Aorta (tissue), 5 donors: ENCODE measurements at regions of chr18 and their contacts with region 1.

Region 1: DNA sequence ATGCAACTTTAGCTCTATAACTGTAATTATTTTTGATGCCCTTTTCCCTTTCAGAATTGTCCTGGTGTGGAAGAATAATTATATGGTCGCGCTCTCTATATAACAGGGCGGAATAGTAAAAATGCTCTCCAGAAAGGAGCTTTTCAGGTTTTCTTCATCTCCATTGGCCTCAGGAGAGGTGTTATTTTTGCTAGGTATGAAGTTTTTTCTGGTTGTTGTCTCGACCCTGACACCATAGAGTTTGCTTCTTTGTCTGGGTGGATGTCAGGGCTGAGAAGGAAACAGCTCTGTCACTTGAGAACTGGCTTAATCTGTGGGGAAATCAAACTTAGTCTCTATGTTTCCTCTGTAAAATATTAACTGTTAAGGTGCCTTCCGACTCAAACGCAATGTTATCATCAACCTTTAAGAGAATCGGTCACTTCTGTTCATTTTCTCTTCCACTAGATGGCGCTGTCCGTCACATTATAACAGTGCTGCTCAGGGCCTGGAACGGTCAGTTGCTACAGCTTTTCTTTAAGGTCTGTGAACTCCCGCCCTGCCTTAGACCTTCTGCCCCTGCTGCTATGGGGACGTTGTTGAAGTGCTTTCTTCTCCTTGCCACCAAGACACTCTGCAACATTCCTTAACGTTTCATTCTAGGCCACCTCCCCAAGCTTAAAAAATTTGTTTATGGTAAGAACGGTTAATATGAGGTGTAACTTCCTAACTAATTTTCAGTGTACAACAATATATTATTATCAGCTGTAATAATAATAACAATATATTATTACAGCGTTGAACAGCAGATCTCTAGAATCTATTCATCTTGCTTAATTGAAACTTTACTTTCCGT is 23.8 kb upstream of the SERPINB12 start:
- DNase-seq: peak in 1 of 2 donors; percentile 44
- ATAC-seq: peak; percentile 77
- H3K4me3 ChIP-seq: no peak overlapping the region
- H3K27ac ChIP-seq: no peak overlapping the region
- H3K4me1 ChIP-seq: no peaks in the 10 kb centered on the region
- H3K27me3 ChIP-seq: no peaks in the 10 kb centered on the region

Region 2: GRCh38 chr18:63578357-63578958 is 60.1 kb after region 1 on chr18:
- intact Hi-C with region 1: loop called (anchors 1 to 2 kb)
- DNase-seq: no peak
- ATAC-seq: no peak
- H3K4me3 ChIP-seq: no peak overlapping the region
- H3K27ac ChIP-seq: no peak overlapping the region
- H3K4me1 ChIP-seq: no peaks in the 10 kb centered on the region
- H3K27me3 ChIP-seq: no peaks in the 10 kb centered on the region

Region 3: GRCh38 chr18:63586431-63586830 is 68.0 kb after region 1 on chr18:
- intact Hi-C with region 1: loop called in 1 of 2 experiments (anchors 2 kb)
- DNase-seq: no peak
- ATAC-seq: no peak
- H3K4me3 ChIP-seq: no peak overlapping the region
- H3K27ac ChIP-seq: no peak overlapping the region
- H3K4me1 ChIP-seq: no peaks in the 10 kb centered on the region
- H3K27me3 ChIP-seq: no peaks in the 10 kb centered on the region

Region 4: DNA sequence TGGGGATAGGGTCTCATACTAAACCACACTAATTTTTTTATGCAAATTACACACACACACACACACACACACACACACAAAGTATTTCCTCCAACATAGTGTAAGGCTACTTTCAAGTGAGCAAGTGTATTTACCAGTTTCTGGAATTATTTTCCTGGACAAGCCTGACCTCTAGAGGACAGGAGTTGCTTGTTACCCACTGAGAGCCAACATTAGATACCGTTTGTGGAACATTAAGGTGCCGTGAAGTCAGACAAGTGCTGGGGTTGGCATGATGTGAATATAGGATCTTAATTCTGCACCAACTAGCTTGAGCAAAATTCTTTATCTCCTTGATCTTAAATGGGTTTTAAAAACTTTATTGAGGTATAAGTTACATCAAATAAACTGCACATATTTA is 329.8 kb after region 1 on chr18:
- intact Hi-C with region 1: loop called (anchors 2 to 5 kb)
- DNase-seq: no peak
- ATAC-seq: peak; percentile 52
- H3K4me3 ChIP-seq: no peak overlapping the region
- H3K27ac ChIP-seq: no peak overlapping the region
- H3K4me1 ChIP-seq: no peaks in the 10 kb centered on the region
- H3K27me3 ChIP-seq: no peaks in the 10 kb centered on the region

Region 5: GRCh38 chr18:63936156-63936931 is 417.9 kb after region 1 on chr18:
- intact Hi-C with region 1: loop called (anchors 2 to 5 kb)
- DNase-seq: peak; percentile 89 to 93
- ATAC-seq: peak; percentile 95
- H3K4me3 ChIP-seq: peak overlapping the region; percentile 23 to 33
- H3K27ac ChIP-seq: no peak overlapping the region
- H3K4me1 ChIP-seq: no peaks in the 10 kb centered on the region
- H3K27me3 ChIP-seq: no peaks in the 10 kb centered on the region

Region 6: DNA sequence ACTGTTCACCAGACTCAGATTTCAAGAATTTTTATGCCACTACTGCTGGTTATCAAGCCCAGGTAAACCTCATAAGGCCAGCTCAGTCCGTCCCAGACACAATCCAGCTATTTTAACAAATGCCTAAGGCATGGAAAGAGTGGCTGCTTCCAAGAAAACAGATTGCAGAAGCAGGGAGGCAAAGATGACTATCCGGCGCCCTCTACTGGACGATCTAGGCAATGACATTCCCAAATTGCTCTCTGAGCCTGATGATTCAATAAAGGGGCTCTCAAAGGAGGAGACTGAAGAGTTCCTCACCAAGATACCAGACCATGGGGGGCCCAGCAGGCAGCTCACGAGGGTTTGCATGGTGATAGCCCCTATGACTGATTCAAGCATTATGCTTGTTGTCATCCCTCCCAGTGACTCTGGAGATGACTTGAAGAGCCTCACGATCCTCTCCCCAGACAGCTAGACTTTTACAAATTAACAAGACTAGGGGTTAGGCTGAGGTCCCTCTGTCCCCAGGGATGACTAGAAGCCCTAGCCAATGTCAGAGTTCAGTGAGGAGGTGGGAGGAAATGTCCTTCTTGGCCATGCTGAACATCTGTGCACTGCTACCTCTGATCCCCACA is 476.5 kb after region 1 on chr18:
- intact Hi-C with region 1: loop called in 1 of 2 experiments (anchors 10 kb)
- DNase-seq: peak; percentile 57 to 74
- ATAC-seq: peak; percentile 79
- H3K4me3 ChIP-seq: no peak overlapping the region
- H3K27ac ChIP-seq: no peak overlapping the region
- H3K4me1 ChIP-seq: no peaks in the 10 kb centered on the region
- H3K27me3 ChIP-seq: no peaks in the 10 kb centered on the region